ENCODE measurements at regions of chr5 and their contacts with region 1.

Region 1: DNA sequence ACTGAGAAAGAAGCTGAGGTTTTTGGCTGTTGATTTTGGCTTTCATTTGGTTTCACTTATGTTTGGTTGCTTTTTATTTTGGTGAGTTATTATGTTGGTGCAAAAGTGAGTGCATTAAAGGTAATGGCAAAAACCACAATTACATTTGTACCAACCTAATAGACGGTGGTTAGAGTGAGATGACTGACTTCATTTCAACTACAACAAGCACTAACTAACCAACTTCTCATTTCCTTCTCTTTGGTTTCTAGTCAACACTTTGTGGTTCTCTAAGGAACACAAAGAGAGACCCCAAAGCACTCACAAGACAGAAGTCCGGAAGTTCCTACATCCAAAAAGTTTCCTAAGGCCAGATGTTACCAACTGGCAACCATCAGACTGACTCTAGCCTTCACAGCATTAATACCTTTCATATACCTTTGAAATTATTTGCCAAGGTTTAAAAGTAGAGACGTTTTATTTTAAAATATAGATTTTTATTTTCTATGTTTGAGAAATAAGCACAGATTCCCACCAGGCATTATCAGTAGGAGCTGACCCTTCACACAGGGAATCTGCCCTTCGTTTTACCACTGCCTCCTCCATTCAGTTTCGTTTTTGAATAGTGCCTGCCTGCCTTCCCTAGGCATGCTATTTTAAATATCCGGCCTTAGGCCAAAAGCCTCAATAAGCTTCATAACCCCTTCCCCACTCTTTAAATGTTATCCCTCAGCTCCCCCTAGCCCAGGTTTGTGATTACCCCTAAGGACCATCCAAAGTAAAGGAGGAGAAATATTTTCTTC is 301.1 kb upstream of the PTGER4 start:
- DNase-seq: no peak
- H3K4me3 ChIP-seq: no peak overlapping the region
- H3K27me3 ChIP-seq: no peaks in the 10 kb centered on the region
- CTCF ChIP-seq: no peak

Region 2: DNA sequence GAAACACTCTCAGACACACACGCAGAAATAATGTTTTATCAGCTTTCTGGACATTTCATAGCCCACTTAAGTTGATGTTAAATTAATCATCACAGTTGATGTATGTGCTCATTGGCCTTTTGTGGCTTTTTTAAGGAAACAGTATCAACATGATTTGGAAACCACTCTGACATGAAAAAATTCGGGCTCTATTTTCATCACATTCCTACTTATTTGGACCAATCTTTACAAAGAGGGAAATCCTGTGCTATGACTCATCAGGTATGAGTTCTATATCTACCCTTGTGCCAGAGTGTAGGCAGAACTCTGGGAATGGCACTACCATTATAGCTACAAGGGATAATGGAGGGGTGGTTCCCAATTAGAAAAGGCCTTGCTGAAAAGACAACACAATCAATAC is 87.2 kb before region 1 on chr5:
- CTCF ChIA-PET with region 1: no interaction called
- POLR2A ChIA-PET with region 1: interaction called, 15 read pairs
- DNase-seq: no peak
- H3K4me3 ChIP-seq: no peak overlapping the region
- H3K27me3 ChIP-seq: no peaks in the 10 kb centered on the region
- CTCF ChIP-seq: no peak